ENCODE measurements at regions of chr11 and their contacts with region 1.

Region 1: GRCh38 chr11:119338318-119338907 is 2.3 kb downstream of the C1QTNF5 start:
- DNase-seq: no peak
- ATAC-seq: peak; percentile 57
- H3K4me3 ChIP-seq: peak overlapping the region; percentile 2; the same call in 1 of the 2 replicates
- H3K27ac ChIP-seq: peak overlapping the region; percentile 96
- H3K4me1 ChIP-seq: peaks cover 26% of the 10 kb centered on the region
- H3K27me3 ChIP-seq: no peaks in the 10 kb centered on the region
- CTCF ChIP-seq: peak; percentile 95
- POLR2A ChIP-seq: no peak
- RAD21 ChIP-seq: peak; percentile 82

Region 2: DNA sequence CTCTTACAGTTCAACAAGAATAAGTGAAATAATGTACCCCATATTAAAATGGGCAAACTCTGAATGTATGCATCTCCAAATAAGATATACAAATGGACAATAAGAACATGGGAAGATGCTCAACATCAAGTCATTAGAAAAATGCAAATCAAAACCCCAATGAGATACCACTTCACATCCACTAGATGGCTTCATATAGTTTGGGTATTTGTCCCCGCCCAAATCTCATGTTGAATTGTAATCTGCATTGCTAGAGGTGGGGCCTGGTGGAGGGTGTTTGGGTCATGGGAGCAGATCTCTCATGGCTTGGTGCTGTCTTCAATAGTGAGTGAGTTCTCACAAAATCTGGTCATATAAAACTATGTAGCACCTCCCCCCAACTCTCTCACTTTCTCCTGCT is 1080.0 kb before region 1 on chr11:
- CTCF ChIA-PET with region 1: no interaction called
- POLR2A ChIA-PET with region 1: no interaction called
- dilution Hi-C with region 1: no loop called
- in situ Hi-C with region 1: no loop called
- intact Hi-C with region 1: no loop called
- DNase-seq: no peak
- ATAC-seq: no peak
- H3K4me3 ChIP-seq: no peak overlapping the region
- H3K27ac ChIP-seq: no peak overlapping the region
- H3K4me1 ChIP-seq: no peaks in the 10 kb centered on the region
- H3K27me3 ChIP-seq: peaks cover 9% of the 10 kb centered on the region
- CTCF ChIP-seq: no peak
- POLR2A ChIP-seq: no peak
- RAD21 ChIP-seq: no peak

Region 3: DNA sequence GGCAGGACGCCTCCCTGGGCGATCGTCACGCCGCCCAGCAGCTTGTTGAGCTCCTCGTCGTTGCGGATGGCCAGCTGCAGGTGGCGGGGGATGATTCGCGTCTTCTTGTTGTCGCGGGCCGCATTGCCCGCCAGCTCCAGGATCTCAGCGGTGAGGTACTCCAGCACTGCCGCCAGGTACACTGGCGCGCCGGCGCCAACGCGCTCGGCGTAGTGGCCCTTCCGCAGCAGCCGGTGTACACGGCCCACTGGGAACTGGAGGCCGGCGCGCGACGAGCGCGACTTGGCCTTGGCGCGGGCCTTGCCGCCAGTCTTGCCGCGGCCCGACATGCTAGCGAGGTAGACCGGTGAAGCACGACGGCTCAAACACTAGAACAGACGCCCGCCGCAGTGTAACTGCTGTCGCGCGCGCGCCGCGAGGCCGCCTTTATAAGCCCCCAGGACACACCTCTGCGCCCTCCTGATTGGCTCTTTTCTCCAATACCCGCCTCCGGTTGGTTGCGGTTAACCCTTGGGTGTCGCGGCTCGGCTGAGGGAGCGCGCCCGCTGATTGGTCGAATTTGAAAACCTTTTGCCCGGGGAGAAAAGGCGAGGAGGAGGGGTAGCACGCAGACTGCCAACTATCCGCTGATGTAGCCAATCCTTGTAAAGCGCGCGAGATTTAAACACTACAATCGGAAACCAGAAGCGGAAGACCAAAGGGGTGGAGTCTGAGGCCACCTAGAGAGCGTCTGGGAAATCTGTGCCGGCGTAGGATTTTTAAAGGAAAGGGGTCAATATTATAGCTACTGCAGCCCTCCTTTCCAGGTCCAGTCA is 243.1 kb before region 1 on chr11:
- CTCF ChIA-PET with region 1: interaction called, 5 read pairs
- POLR2A ChIA-PET with region 1: no interaction called
- dilution Hi-C with region 1: no loop called
- in situ Hi-C with region 1: no loop called
- intact Hi-C with region 1: loop called (anchors 1 kb)
- DNase-seq: peak; percentile 99
- ATAC-seq: peak; percentile 90
- H3K4me3 ChIP-seq: peak overlapping the region; percentile 57
- H3K27ac ChIP-seq: peak overlapping the region; percentile 44; the same call in 1 of the 2 replicates
- H3K4me1 ChIP-seq: peaks cover 15% of the 10 kb centered on the region
- H3K27me3 ChIP-seq: no peaks in the 10 kb centered on the region
- CTCF ChIP-seq: no peak
- POLR2A ChIP-seq: peak; percentile 100
- RAD21 ChIP-seq: no peak

Region 4: DNA sequence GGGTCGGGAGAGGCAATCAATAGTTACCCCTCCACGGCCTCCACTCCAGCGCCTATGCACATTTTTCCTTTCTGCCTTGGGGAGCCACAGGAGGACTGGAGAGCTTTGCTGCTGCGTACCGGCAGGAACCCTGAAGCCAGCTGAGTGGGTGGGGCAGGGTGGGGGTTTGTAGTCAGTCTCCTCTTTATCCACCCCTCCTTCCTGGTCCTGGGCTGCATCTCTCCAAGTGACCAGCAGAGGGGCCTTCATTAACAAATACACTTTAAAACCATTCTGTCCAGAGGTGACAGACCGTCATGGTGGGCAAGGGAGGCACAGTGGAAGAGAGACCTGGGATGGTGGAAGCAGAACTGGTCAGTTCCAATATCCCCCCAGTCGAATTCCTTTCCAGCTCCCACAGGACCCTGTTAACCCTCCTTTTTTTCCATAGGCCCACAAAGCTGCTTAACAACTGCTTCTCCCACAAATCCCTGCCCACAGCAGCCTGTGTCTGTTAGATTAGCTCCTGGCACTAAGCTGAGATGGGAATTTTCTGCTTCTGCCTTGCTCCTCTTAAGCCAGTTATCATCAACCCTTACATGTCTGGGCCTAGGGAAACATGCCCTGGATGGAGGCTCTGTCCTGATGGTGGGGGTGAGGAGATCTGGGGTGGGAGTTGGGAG is 193.5 kb before region 1 on chr11:
- CTCF ChIA-PET with region 1: interaction called, 6 read pairs
- POLR2A ChIA-PET with region 1: no interaction called
- dilution Hi-C with region 1: no loop called
- in situ Hi-C with region 1: no loop called
- intact Hi-C with region 1: loop called (anchors 5 kb)
- DNase-seq: peak; percentile 68
- ATAC-seq: peak; percentile 90
- H3K4me3 ChIP-seq: no peak overlapping the region
- H3K27ac ChIP-seq: no peak overlapping the region
- H3K4me1 ChIP-seq: 0 out of 2 replicates have a peak, but pooled peaks cover 2% of the 10 kb centered on the region
- H3K27me3 ChIP-seq: peaks cover 24% of the 10 kb centered on the region
- CTCF ChIP-seq: peak; percentile 62
- POLR2A ChIP-seq: no peak
- RAD21 ChIP-seq: peak; percentile 50

Region 5: DNA sequence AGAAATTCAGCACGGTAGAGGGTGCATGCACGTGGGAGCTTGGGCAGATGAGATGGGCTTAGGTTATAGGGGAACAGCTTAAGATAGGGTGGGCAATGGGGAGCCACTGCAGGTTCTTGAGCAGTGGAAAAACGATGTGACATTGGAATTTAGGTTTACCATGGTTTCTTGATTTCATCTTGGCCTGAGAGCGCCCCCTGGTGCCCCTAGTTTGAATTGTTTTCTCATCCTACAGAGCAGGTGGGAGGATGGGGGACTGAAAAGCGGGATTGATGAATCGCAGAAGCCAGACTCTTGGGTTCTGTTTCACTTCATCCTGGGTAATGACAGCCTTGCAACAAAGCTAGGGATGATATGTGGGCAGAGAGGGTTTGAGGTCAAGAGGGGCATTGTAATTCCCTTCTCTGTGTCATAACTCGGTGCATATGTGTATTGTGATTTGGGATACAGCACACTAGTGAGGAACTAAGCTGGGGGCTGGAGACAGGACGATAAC is 14.8 kb before region 1 on chr11:
- CTCF ChIA-PET with region 1: interaction called, 16 read pairs
- POLR2A ChIA-PET with region 1: interaction called, 7 read pairs
- dilution Hi-C with region 1: no loop called
- in situ Hi-C with region 1: no loop called
- intact Hi-C with region 1: loop called (anchors 2 kb)
- DNase-seq: peak; percentile 66
- ATAC-seq: no peak
- H3K4me3 ChIP-seq: no peak overlapping the region
- H3K27ac ChIP-seq: no peak overlapping the region
- H3K4me1 ChIP-seq: peaks cover 24% of the 10 kb centered on the region
- H3K27me3 ChIP-seq: no peaks in the 10 kb centered on the region
- CTCF ChIP-seq: peak; percentile 89
- POLR2A ChIP-seq: no peak
- RAD21 ChIP-seq: peak; percentile 81

Region 6: DNA sequence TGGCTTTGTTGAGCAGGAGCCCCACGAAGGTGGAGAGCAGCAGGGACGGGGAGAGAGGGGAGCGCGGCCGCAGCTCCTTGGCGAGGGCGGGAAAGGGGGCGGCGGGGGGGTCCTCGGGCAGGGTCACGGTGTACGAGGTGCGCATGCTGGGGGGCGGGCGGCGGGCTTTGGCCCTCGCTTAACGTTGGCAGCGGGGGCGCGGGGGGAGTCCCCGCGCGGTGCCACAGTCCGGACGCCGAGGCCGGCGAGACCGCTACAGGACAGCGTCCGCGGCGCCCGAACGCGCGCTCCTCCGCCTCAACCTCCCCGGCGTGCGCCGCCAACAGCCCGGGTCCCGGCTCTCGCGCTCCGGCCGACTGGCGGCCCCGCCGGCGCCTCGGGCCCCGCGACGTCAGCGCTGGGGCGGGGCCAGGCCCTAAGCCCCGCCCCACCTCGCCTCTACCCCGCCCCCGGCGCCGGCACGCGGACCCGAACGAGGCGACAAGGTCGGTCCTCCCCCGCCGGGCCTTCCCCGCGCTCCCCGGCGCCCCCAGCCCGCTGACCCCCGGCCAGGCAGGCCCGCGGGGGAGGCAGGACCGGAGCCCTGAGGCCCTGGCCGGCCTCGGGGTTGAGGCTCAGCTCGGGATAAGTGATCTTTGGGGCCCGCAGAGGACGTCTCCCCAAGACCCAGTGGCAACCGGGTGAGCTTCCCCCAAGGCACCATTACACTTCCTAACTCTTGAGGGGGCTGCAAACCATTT is 25.6 kb after region 1 on chr11:
- CTCF ChIA-PET with region 1: interaction called, 3 read pairs
- POLR2A ChIA-PET with region 1: interaction called, 6 read pairs
- dilution Hi-C with region 1: no loop called
- in situ Hi-C with region 1: no loop called
- intact Hi-C with region 1: loop called (anchors 1 kb)
- DNase-seq: no peak
- ATAC-seq: peak; percentile 76
- H3K4me3 ChIP-seq: peak overlapping the region; percentile 38
- H3K27ac ChIP-seq: no peak overlapping the region
- H3K4me1 ChIP-seq: peaks cover 34% of the 10 kb centered on the region
- H3K27me3 ChIP-seq: no peaks in the 10 kb centered on the region
- CTCF ChIP-seq: no peak
- POLR2A ChIP-seq: no peak
- RAD21 ChIP-seq: no peak

Region 7: DNA sequence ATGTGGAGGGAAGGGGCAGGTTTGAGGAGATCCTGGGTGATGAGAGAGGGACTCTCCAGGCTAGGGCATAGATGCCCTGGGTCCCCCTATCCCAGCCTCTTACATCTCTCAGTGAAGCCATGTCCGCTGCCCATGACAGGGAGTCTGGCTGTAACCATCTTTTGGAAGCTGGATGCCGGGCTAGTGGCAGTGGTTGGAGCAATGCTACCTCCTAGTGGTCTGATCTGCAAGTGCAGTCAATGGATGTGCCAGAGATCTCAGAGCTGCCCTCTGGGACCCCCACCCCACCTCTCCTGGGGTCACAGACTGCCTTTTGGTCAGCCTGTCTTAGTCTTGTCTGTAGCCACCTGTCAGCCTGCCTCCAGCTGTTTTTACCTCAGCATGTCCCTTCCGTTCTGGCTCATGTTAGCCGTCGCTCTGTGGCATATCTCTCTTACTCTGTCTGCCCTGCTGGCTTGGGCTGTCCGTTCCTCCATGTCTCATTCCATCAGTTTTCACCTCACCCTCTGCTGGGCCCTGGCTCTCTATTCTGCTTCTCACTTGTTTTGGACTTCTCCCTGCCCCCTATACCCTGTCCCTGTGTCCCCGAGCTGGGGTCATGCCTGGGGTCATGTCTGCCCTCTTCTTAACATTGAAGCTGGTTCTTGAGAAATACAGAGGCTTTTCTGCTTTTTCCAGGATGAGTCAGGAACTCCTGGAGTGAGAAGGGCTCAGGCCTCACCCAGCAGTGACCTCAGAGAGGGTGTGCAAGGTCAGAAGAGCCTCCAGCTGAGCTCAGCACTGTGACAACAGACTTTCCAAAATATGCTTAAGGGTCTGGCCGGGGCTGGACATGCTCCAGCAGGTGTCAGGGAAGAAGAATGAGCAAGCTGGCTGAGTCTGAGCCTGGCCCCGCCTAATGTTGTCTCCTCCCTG is 136.5 kb after region 1 on chr11:
- CTCF ChIA-PET with region 1: interaction called, 8 read pairs
- POLR2A ChIA-PET with region 1: no interaction called
- dilution Hi-C with region 1: no loop called
- in situ Hi-C with region 1: no loop called
- intact Hi-C with region 1: loop called (anchors 1 kb)
- DNase-seq: peak; percentile 82
- ATAC-seq: peak; percentile 81
- H3K4me3 ChIP-seq: no peak overlapping the region
- H3K27ac ChIP-seq: peak overlapping the region; percentile 24; the same call in 1 of the 2 replicates
- H3K4me1 ChIP-seq: peaks cover 17% of the 10 kb centered on the region
- H3K27me3 ChIP-seq: peaks cover 12% of the 10 kb centered on the region; the same call in 1 of the 2 replicates
- CTCF ChIP-seq: peak; percentile 96
- POLR2A ChIP-seq: peak; percentile 51; the same call in 1 of the 2 replicates
- RAD21 ChIP-seq: peak; percentile 99

Measured in IMR-90 (cell line).